ENCODE measurements at regions of chrX and their contacts with region 1.

Region 1: GRCh38 chrX:48021026-48021900 is 14.5 kb downstream of the SPACA5 start:
- DNase-seq: peak in 41 of 42 donors; percentile 44 to 94 (median 76)

Region 2: GRCh38 chrX:47650164-47651042 is 370.9 kb before region 1 on chrX and contains the start of gene ELK1:
- intact Hi-C with region 1: loop called (anchors 10 kb)
- DNase-seq: peak; percentile 86 to 99 (median 96)

Region 3: DNA sequence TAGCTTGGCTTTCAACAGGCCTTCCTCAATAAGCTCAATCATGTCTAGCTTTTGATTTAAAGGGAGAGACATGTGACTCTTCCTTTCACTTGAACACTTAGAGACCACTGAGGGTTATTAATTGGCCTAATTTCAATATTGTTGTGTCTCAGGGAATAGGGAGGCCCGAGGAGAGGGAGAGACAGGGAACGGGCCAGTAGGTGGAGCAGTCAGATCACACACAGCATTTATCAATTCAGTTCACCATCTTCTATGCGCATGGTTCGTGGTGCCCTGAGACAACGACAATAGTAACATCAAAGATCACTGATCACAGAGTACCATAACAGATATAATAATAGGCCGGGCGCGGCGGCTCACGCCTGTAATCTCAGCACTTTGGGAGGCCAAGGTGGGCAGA is 166.8 kb before region 1 on chrX:
- intact Hi-C with region 1: loop called (anchors 10 kb)
- DNase-seq: peak in 41 of 42 donors; percentile 8 to 76 (median 43)